ENCODE measurements at regions of chr16 and their contacts with region 1.

Region 1: DNA sequence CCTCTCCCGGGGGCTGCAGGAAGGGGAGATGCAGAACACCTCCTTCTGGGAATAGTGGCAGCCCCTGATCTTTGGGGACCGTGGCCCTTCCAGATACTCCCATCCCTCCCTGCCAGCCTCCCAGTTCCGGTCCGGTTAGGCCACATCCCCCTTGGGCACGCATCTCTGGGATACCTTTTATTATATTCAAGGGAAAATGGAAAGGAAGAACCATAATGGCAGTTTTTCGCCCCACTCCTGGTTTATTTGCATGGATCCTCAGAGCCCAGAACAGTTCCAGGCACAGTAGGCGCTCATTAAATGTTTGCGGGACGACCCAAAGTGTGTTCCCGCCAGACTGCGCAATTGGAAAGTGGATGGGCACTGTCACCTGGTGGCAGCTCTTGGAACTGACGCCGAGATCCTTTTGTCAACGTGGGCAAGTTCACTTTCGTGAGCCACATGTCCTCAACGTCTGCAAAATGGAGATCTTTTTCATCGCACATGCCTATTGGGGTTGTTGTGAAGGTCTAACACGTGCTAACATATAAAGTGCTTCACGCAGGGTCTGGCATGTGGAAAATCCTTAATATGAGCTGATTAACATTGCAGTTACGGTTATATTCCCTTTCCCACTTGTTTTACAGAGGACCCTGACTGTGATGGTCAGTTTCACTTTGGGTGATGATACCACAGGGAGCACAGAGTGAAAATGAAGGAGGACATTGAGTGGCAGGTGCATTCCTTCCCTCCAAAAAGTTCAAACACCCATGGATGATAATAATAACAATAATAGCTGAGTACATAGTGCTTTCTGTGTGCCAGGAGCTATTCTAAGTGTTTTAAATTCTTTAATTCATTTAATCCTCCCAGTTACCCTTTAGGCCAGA is 1.7 kb upstream of the GPRC5B start:
- DNase-seq: peak; percentile 76 to 91 (median 86)
- ATAC-seq: peak; percentile 35 to 53
- H3K4me3 ChIP-seq: no peak overlapping the region
- H3K27ac ChIP-seq: no peak overlapping the region
- H3K4me1 ChIP-seq: no peaks in the 10 kb centered on the region
- H3K27me3 ChIP-seq: no peaks in the 10 kb centered on the region

Region 2: DNA sequence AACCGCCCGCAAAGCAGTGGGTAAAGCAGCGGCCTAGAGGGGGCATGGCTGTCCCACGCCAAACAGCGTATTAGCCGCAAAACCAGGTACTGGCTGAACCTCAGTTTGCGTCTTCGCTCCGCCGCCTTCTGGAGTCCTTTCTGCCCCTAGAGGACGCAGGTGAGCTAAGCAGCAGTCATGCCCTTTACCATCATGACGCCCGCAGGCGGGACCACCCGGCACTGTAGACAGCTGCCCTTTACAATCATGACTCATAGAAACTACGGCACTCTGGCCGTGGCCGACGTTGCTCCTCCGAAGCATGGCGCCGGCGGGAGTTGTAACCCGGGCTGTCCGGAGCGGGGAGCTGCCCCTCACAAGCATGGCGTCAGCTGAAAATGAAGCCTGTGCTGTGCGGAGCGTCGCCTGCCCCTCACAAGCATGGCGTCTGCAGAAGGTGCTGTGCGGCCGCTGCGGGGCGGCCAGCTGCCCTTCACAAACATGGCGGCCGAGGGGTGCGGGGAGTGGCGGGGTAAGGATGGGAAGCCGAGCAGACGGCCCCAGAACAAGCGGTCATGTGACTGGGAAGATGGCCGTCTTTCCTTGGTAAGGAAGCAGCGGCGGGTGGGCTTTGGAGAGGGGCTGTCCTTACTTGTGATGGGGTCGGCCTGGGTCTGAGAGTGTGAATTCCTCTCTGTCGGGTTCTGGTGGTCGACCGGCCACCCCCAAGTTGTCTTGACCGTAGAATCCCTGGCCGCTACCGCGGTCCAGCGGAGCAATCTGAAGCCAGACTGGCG is 331.0 kb before region 1 on chr16 and contains the start of gene VPS35L:
- intact Hi-C with region 1: loop called in 2 of 4 experiments (anchors 5 kb)
- DNase-seq: peak; percentile 99
- ATAC-seq: peak; percentile 100
- H3K4me3 ChIP-seq: peak within 1 kb of the TSS; percentile 76
- H3K27ac ChIP-seq: peak within 1 kb of the TSS; percentile 97
- H3K4me1 ChIP-seq: peaks cover 5% of the 10 kb centered on the region
- H3K27me3 ChIP-seq: no peaks in the 10 kb centered on the region
- total RNA-seq, gene VPS35L: 31.5 to 40.1 (median 33.9) TPM

Region 3: GRCh38 chr16:19601083-19601976 is 285.0 kb before region 1 on chr16:
- intact Hi-C with region 1: loop called (anchors 2 to 5 kb)
- DNase-seq: no peak
- ATAC-seq: peak in 1 of 2 donors; percentile 36
- H3K4me3 ChIP-seq: no peak overlapping the region
- H3K27ac ChIP-seq: no peak overlapping the region
- H3K4me1 ChIP-seq: no peaks in the 10 kb centered on the region
- H3K27me3 ChIP-seq: no peaks in the 10 kb centered on the region

Region 4: GRCh38 chr16:19717771-19718602 is 168.3 kb before region 1 on chr16 and contains the starts of genes IQCK and KNOP1:
- intact Hi-C with region 1: loop called in 2 of 4 experiments (anchors 5 kb)
- DNase-seq: peak; percentile 93 to 97 (median 96)
- ATAC-seq: peak; percentile 97
- H3K4me3 ChIP-seq: peak within 1 kb of the TSS; percentile 68
- H3K27ac ChIP-seq: peak within 1 kb of the TSS; percentile 59
- H3K4me1 ChIP-seq: peaks cover 4% of the 10 kb centered on the region
- H3K27me3 ChIP-seq: no peaks in the 10 kb centered on the region
- total RNA-seq, gene IQCK: 5.1 to 8.3 (median 6.4) TPM
- total RNA-seq, gene KNOP1: 6.1 to 9.2 (median 7.9) TPM

Region 5: GRCh38 chr16:19844945-19845641 is 41.2 kb before region 1 on chr16:
- intact Hi-C with region 1: loop called in 1 of 4 experiments (anchors 5 kb)
- DNase-seq: peak in 1 of 3 donors; percentile 25
- ATAC-seq: no peak
- H3K4me3 ChIP-seq: no peak overlapping the region
- H3K27ac ChIP-seq: peak overlapping the region; percentile 33
- H3K4me1 ChIP-seq: no peaks in the 10 kb centered on the region
- H3K27me3 ChIP-seq: no peaks in the 10 kb centered on the region